Posterior vena cava (tissue), 2 donors: ENCODE measurements at regions of chr1 and their contacts with region 1.

Region 1: GRCh38 chr1:156090822-156091188 is 8.5 kb upstream of the MEX3A start:
- DNase-seq: peak; percentile 95

Region 2: DNA sequence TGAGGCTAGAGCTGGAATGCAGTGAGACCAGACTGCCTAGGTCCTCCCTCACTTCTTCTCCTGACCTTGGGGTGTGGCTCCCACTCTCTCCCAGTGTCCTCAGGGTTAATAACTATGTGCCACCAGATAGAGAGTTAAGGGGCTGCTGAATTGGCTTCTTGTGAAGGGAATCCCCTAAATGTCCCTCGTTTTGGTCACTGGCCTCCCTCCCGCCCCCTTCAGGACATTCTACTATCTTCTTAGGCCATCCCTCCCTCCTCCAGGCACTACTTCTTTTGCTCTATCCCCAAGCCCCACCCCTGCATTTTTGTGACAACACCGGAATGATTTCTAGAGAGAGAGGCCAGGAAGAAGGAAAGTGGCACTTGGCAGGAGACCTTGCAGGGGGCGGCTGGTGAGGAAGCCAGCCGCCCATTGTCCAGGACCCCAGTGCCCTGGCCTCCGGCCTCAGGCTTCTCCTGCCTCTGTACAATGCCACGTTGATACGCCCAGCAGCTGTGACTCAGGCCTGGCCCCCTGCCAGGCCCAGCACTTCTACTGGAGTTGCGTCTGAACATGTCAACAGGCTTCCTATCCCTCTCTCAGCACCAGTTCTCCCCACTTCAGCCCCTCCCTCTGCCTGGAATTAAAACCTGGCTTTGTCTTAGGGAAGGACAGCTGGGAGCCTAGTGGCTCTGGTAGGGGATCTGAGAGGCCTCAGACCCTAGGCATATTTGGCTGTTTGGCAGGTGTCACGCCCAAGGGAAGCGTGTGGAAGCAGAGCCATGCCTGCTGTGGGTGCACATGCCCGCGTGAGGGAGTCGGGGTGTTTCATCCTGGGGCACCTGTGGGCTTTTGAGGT is 32.8 kb after region 1 on chr1:
- intact Hi-C with region 1: no loop called
- DNase-seq: peak; percentile 99

Region 3: GRCh38 chr1:156136970-156137483 is 46.2 kb after region 1 on chr1:
- intact Hi-C with region 1: loop called (anchors 2 to 5 kb)
- DNase-seq: no peak

Region 4: GRCh38 chr1:156217871-156218270 is 127.1 kb after region 1 on chr1:
- intact Hi-C with region 1: loop called (anchors 5 kb)
- DNase-seq: peak; percentile 6

Region 5: DNA sequence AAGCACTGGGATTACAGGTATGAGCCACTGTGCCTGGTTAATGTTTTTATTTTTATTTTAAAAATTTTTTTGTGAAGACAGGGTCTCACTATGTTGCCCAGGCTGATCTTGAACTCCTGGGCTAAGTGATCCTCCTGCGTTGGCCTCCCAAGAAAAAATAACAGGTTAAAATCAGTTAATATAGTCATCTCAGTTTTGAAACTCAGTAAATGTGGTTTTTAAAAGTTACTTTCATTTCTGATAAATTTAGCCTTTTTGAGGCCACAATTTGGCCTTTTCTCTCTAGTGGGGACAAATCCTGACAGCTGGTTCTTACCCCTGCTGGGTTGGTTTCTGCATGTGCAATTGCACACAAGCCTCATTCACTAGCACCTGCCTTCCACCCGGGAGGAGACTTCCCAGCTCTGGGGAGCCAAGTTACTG is 135.3 kb after region 1 on chr1:
- intact Hi-C with region 1: loop called (anchors 5 kb)
- DNase-seq: no peak